ENCODE measurements at regions of chr12 and their contacts with region 1.

Region 1: DNA sequence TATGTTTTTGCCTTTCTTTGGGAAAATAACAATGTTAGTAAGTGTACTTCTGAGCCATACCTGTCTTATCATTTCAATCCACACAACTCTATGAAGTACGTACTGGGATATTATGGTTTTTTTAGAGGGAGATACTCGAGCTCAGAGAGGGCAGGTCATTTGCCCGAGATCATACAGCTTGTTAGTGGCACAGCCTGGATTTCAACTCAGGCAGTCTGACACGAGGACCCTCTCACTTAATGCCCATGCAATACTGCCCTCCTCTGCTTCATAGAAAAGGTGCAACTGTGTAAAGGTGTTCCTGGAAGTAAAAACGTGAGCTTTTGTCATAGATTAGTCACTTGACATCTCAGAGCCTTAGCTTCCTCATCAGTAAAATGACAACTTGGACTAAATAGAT is 128.0 kb downstream of the NDUFA12 start:
- DNase-seq: peak; percentile 69
- CTCF ChIP-seq: peak; percentile 52

Region 2: DNA sequence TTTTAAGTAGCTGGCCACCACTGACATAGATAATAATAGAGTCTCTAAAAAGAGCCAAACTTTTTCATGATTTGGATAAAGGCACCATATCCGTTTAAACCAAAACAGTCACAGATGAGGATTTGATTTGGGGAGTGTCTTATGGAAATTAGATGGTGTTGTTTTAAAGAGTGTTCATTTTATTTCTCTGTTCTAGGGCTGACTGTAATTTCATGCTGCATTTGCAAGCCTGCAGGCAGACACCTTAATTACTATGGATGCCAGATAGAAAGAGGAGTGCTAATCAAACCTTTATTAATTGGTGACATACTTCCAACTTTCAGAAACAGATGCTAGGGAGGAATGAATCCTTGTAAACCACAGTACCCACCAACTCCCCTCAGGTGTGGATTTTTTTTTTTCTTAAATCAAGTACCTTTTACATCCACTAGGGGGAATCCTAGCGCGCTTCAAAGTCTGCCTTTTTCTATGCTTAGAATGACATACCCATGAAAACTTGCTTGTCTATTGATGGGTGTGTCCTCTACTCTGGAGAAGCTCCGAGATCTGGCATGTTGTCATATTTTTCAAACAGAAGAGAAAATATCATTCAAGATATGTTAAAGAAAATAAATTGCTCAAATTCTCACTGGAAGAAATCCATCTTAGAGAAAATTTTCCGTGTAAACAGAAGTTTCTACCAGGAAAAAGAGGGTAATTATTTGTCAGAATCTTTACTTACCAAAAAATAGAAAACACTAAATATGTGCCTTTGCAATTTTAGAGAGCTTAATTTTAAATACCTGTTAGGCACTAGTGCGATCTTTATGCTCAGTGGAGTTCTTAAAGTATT is 741.3 kb before region 1 on chr12:
- in situ Hi-C with region 1: loop called (anchors 25 kb)
- DNase-seq: peak; percentile 64
- CTCF ChIP-seq: peak; percentile 47

Region 3: DNA sequence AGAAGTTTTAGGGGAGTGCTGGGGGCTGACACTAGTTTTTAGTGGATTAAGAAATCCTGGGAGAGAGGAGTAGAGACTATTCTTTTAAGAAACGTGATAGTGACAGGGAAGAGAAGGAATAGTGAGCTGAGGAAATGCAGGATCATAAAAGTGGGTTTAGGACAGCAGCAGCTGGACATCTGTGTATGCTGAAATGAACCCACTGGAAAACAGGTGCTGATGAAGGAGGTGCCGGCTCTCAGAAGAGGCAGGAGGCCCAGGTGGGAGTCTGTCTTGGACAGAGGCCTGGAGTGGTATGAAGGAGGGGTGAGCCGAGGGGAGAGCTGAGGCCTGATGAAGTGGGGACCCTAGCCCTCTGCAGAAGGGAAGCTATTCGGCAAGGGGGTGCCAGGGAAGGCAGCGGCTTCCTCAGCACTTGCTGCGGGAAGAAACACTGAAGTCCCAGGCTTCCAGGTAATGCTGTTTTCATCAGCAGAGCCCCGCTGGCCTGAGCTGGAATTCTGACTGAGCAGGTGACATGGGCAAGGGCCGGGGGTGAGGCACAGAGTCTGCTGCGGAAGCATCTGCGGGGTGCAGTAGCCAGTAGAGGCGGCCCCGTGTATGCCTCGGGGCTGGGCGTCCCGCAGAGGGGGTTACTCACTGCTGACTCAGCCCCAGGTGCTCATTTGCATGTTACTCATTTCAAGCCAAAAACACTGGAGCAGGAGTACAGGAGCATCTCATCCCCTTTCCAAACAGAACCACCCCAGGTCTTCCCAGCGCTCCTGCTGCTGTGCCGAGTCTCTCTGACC is 314.9 kb before region 1 on chr12:
- in situ Hi-C with region 1: loop called (anchors 10 kb)
- DNase-seq: peak; percentile 59
- CTCF ChIP-seq: no peak

Measured in GM13976 (cell line).